ENCODE measurements at regions of chr16 and their contacts with region 1.

Region 1: DNA sequence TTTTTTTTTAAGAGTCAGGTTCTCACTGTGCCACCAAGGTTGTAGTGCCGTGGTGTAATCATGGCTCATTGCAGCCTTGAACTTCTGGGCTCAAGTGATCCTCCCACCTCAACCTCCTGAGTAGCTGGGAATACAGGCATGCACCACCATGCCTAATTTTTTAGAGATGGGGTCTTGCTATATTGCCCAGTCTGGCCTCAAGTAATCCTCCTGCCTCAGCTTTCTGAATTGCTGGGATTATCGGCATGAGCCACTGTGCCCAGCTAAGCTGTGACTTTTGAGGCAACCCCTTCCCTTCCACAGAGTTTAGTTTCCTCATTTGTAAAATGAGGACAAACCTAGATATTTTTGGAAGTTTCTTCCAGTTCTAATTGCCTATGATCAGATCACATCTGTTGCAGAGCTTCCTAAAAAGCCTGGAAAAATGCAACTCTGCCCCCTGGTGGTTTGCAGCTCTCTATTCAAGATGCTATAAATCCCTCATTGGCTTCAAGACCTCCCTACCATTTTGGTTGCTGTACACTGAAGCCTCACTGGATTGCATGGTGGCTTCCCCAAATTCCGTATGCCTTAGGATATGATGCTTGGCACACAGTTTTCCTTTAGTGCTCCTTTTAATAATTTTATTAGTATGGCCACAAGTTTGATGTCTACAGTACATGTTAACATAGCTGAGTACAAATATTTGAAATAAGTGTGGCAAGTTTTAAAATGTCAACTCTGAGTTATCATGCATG is 19.3 kb downstream of the GDE1 start:
- DNase-seq: peak in 3 of 4 donors; percentile 51 to 82 (median 58)
- ATAC-seq: peak; percentile 83
- H3K4me3 ChIP-seq: no peak overlapping the region
- H3K27ac ChIP-seq: no peak overlapping the region
- H3K4me1 ChIP-seq: no peaks in the 10 kb centered on the region
- H3K27me3 ChIP-seq: no peaks in the 10 kb centered on the region
- CTCF ChIP-seq: peak; percentile 76 to 78

Region 2: GRCh38 chr16:19389246-19389645 is 113.3 kb before region 1 on chr16:
- intact Hi-C with region 1: loop called in 1 of 2 experiments (anchors 5 kb)
- DNase-seq: peak in 3 of 4 donors; percentile 63 to 79 (median 73)
- ATAC-seq: peak; percentile 87
- H3K4me3 ChIP-seq: no peak overlapping the region
- H3K27ac ChIP-seq: peak overlapping the region in 1 of 2 donors; percentile 39
- H3K4me1 ChIP-seq: no peaks in the 10 kb centered on the region
- H3K27me3 ChIP-seq: no peaks in the 10 kb centered on the region
- CTCF ChIP-seq: peak; percentile 34 to 52

Region 3: GRCh38 chr16:19765860-19766553 is 263.4 kb after region 1 on chr16:
- intact Hi-C with region 1: no loop called
- DNase-seq: peak in 1 of 4 donors; percentile 60
- ATAC-seq: peak; percentile 61
- H3K4me3 ChIP-seq: no peak overlapping the region
- H3K27ac ChIP-seq: peak overlapping the region in 1 of 2 donors; percentile 36
- H3K4me1 ChIP-seq: peaks cover 0 to 8% of the 10 kb centered on the region in 2 donors
- H3K27me3 ChIP-seq: no peaks in the 10 kb centered on the region
- CTCF ChIP-seq: no peak